ENCODE measurements at regions of chr1 and their contacts with region 1.

Region 1: GRCh38 chr1:91500756-91501522 is at the start of gene CDC7:
- DNase-seq: peak; percentile 94
- ATAC-seq: peak; percentile 96
- total RNA-seq, gene CDC7: 0.95 TPM

Region 2: DNA sequence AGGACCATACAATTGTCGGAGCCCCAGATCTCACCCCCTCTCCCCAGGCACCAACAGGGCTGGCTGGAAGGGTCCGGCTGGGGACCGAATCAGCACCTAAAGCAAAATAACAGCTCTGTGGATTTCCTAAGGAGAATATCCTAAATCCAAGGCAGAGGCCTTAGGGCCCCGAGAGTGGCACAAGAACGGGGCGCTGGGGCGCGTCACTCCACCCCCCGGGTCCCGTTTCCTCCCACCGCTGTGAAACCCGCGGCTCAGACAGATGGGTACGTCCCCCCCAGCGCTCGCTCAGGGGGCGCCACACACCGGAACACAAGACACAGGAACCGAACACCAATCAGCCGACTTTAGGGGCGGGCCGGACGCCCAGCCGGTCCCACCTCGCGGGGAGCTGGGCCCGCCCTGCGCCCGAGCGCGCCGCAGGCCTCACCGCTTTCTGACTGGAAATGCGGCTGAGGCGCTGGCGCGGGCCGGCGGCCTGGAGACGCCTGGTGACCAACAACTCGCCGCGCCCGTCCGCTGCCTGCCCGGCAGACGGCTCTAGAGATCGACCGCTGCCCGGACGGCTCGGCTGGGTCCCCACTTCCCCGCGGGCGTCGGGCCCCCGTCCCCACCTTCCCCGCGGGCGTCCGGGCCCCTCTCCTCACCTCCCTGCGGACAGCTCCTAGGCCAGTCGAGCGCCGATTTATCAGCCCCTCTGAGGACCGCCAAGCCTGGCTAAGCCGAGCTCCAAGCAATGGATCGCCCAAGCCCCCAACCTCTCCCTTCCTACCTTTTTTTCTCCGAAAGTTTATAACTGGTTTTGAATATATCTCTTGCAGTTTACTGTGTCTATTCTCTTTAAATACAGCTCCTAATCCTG is 96.6 kb before region 1 on chr1 and contains the start of gene HFM1:
- intact Hi-C with region 1: loop called (anchors 5 kb)
- DNase-seq: peak; percentile 92
- ATAC-seq: peak; percentile 99
- total RNA-seq, gene HFM1: 1.6 TPM

Region 3: GRCh38 chr1:91523482-91523881 is 22.5 kb after region 1 on chr1:
- intact Hi-C with region 1: no loop called
- DNase-seq: no peak
- ATAC-seq: no peak

Region 4: DNA sequence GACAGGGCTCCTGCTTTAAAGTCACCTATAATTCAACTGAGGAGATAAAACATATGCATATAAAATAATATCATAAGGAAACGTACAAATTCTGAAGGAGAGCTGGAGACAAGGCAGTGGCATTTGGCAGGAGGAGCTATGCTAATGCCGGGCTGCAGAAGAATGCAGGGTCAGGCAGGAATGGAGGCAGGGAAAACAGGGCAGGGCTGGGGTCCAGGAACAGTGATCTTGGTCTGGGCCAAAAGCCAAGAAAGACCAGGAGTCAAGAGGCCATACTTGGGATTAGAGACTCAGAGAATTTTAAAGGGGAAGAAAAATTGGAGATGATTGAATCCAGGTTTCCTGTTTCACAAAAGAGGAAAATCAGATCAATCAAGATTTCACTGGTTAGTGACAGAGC is 428.3 kb after region 1 on chr1:
- intact Hi-C with region 1: loop called (anchors 5 kb)
- DNase-seq: no peak
- ATAC-seq: peak; percentile 63